Mammary epithelial cell (primary cell): ENCODE measurements at regions of chr2 and their contacts with region 1.

Region 1: GRCh38 chr2:9813312-9814133 is 29.8 kb upstream of the TAF1B start:
- DNase-seq: peak; percentile 44
- H3K4me3 ChIP-seq: no peak overlapping the region
- H3K27ac ChIP-seq: no peak overlapping the region
- H3K4me1 ChIP-seq: peaks cover 17% of the 10 kb centered on the region
- H3K27me3 ChIP-seq: no peaks in the 10 kb centered on the region
- CTCF ChIP-seq: peak; percentile 95

Region 2: DNA sequence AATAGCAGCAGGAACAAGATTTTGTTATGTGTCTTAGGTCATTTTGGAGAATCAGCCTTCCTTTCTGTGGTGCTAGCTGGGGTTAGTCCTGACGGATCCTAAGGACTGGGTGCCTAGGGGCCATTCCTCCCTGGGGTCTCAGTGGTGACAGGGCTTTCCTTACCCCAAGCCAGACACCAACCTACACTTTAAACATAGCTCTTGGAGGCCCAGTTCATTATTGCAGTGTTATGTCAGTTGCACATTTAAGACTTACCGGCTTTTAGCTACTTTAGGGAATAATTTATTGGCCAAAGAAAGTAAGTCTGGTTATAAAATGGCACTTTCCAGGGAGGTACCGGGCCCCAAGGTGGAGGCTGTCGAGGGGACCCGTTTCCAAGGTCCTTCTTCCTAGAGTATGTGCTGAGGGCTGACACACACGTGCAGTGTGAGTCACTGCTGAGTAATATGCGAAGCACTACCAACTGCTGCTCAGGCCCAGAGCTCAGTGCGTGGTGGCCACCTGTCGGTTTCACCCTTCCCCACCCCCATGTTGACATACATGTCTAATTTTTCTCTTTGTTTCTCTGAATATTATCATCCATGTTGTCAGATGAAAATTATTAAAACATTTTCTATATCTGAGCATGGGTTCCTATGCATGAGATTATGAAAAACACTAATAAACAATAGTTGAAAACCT is 101.0 kb after region 1 on chr2:
- CTCF ChIA-PET with region 1: interaction called, 7 read pairs
- dilution Hi-C with region 1: loop called (anchors 5 kb)
- in situ Hi-C with region 1: no loop called
- intact Hi-C with region 1: loop called (anchors 1 kb)
- DNase-seq: peak; percentile 82
- H3K4me3 ChIP-seq: no peak overlapping the region
- H3K27ac ChIP-seq: peak overlapping the region; percentile 15
- H3K4me1 ChIP-seq: peaks cover 8% of the 10 kb centered on the region
- H3K27me3 ChIP-seq: no peaks in the 10 kb centered on the region
- CTCF ChIP-seq: peak; percentile 27 to 71

Region 3: DNA sequence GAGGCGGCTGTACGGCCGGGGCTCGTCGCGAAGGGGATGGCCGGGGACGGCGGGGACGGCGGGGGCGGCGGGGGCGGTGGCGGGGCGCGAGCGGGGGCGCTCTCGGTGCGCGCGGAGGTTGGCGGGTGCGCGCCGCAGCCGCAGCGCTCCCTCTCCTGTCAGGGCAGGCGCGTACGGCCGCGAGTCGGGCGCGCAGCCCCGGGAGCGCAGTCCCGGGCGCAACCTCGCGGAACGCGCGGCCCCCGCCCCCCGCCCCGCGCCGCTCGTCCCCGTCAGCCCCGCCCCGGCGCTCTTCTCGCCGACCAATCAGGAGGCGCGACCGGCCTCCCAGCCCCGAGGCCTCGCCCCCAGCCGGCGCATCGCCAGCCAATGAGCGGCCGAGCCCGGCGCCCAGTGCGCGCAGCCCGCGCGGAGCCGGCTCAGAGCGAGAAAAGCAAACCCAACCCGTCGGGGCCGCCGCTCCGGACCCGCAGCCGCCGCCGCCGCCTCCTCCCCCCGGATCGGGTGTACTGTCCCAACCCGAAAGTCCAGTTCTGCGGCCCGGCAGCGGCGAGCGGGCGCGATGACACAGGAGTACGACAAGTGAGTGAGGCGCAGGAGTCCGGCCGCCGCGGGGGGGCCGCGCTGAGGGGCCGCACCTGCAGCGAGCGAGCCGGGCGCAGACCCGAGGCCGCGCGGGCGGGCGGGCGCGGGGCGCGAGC is 137.9 kb after region 1 on chr2 and contains the start of gene GRHL1:
- CTCF ChIA-PET with region 1: no interaction called
- dilution Hi-C with region 1: no loop called
- in situ Hi-C with region 1: no loop called
- intact Hi-C with region 1: loop called (anchors 2 kb)
- DNase-seq: peak; percentile 91
- H3K4me3 ChIP-seq: peak within 1 kb of the TSS; percentile 68 to 78 (median 69)
- H3K27ac ChIP-seq: no peak within 1 kb of the TSS
- H3K4me1 ChIP-seq: peaks cover 10% of the 10 kb centered on the region
- H3K27me3 ChIP-seq: peaks cover 2% of the 10 kb centered on the region
- CTCF ChIP-seq: no peak
- total RNA-seq, gene GRHL1: 2.2 to 6.0 TPM

Region 4: GRCh38 chr2:10028988-10029874 is 215.7 kb after region 1 on chr2:
- CTCF ChIA-PET with region 1: no interaction called
- dilution Hi-C with region 1: loop called (anchors 5 kb)
- in situ Hi-C with region 1: no loop called
- intact Hi-C with region 1: no loop called
- DNase-seq: no peak
- H3K4me3 ChIP-seq: no peak overlapping the region
- H3K27ac ChIP-seq: no peak overlapping the region
- H3K4me1 ChIP-seq: no peaks in the 10 kb centered on the region
- H3K27me3 ChIP-seq: no peaks in the 10 kb centered on the region
- CTCF ChIP-seq: no peak

Region 5: GRCh38 chr2:10043906-10044601 is 230.5 kb after region 1 on chr2:
- CTCF ChIA-PET with region 1: no interaction called
- dilution Hi-C with region 1: no loop called
- in situ Hi-C with region 1: no loop called
- intact Hi-C with region 1: loop called (anchors 1 kb)
- DNase-seq: peak; percentile 88
- H3K4me3 ChIP-seq: peak overlapping the region; percentile 27 to 72 (median 67)
- H3K27ac ChIP-seq: peak overlapping the region; percentile 19
- H3K4me1 ChIP-seq: peaks cover 4% of the 10 kb centered on the region
- H3K27me3 ChIP-seq: no peaks in the 10 kb centered on the region
- CTCF ChIP-seq: no peak